MCF 10A (cell line): ENCODE measurements at regions of chr11 and their contacts with region 1.

Region 1: GRCh38 chr11:84430661-84431060 is 1144.5 kb upstream of the CCDC90B start:
- DNase-seq: no peak
- H3K4me3 Mint-ChIP-seq: no peak overlapping the region
- H3K27ac Mint-ChIP-seq: no peak overlapping the region
- H3K4me1 Mint-ChIP-seq: no peaks in the 10 kb centered on the region
- H3K27me3 Mint-ChIP-seq: peaks cover 4% of the 10 kb centered on the region
- CTCF ChIP-seq: no peak

Region 2: GRCh38 chr11:84412862-84413261 is 17.8 kb before region 1 on chr11:
- CTCF ChIA-PET with region 1: no interaction called
- POLR2A ChIA-PET with region 1: interaction called, 3 read pairs
- intact Hi-C with region 1: loop called (anchors 1 kb)
- DNase-seq: no peak
- H3K4me3 Mint-ChIP-seq: no peak overlapping the region
- H3K27ac Mint-ChIP-seq: no peak overlapping the region
- H3K4me1 Mint-ChIP-seq: no peaks in the 10 kb centered on the region
- H3K27me3 Mint-ChIP-seq: peaks cover 12% of the 10 kb centered on the region
- CTCF ChIP-seq: no peak